PC-3 (cell line): ENCODE measurements at regions of chr5 and their contacts with region 1.

Region 1: GRCh38 chr5:84382363-84383295 is 2.1 kb downstream of the EDIL3 start:
- DNase-seq: no peak
- ATAC-seq: peak; percentile 8
- H3K4me3 ChIP-seq: peak overlapping the region; percentile 77
- H3K27ac ChIP-seq: peak overlapping the region; percentile 46
- H3K4me1 ChIP-seq: peaks cover 15% of the 10 kb centered on the region
- H3K27me3 ChIP-seq: no peaks in the 10 kb centered on the region
- CTCF ChIP-seq: no peak

Region 2: DNA sequence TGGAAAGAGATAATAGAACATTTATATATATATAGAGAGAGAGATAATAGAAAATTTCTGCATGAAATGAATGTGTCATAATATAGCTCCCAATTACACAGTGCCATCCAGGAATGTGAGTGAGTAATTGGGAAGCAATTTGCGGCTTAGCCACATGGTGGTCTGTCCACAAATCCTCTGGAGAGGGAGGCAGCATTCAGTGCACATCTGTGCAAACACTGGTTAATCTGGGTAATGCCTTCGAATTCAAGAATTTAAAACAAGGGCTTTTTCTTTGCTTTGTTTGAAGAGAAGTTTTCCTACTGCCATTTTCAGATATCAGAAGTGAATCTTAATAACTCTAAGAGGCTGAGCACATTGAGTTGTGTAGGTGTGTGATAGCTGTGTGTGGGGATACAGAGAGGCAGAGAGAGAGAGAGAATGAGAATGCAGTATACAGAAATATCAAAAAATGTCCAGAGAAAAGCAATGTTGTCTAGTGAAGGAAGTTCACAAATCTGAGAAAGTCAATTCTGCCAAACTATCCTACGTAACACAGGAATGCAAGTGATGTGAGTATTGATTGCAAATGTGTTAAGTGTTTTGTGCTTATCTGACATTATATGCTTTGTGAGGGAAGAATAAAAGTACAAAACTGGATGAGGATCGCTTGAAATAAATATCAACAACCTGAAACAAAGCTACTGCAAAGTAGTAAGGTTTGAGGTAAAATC is 132.6 kb before region 1 on chr5:
- CTCF ChIA-PET with region 1: no interaction called
- POLR2A ChIA-PET with region 1: no interaction called
- intact Hi-C with region 1: loop called (anchors 5 kb)
- DNase-seq: peak; percentile 84
- ATAC-seq: peak; percentile 76
- H3K4me3 ChIP-seq: peak overlapping the region; percentile 47; the same call in 1 of the 2 replicates
- H3K27ac ChIP-seq: peak overlapping the region; percentile 58
- H3K4me1 ChIP-seq: peaks cover 54% of the 10 kb centered on the region
- H3K27me3 ChIP-seq: no peaks in the 10 kb centered on the region
- CTCF ChIP-seq: no peak

Region 3: DNA sequence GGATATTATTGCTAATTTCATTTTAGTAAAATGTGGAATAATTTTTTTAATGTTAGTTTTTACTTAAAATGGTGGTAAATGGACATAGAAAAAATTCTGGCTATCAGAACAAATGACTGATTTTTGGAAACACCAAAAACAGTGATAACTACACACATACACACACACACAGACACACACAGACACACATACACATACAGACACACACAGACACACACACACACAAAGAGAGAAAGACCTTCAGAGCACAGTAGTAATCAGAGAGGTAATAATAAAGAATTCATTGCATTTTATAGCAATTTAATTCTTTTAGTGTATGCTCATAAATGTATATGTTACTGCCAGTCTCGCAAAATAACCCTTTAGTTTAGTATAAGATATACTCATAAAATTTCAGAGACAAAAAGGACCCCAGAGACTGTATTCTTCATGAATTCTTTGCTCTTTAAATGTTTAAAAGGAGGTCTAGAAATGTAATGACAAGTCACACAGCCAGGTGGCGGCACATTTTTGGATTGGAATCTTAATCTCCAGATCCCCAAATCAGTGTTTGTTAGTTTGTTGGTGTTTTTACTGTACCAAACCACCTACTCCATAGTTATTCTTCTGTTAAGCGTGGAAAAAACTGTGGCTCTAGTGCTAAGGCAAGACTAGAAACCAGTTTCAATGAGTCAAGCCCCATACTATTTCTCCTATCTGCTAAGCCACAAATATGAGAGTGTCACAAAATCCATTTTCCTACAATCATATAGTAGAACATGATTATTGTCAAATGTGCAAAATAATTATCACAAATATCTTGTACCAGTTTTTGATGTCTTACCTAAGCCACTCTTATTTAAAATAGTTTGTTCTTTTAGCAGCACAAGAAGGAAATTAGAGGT is 107.8 kb before region 1 on chr5:
- CTCF ChIA-PET with region 1: no interaction called
- POLR2A ChIA-PET with region 1: interaction called, 3 read pairs
- intact Hi-C with region 1: loop called (anchors 5 kb)
- DNase-seq: peak; percentile 60
- ATAC-seq: no peak
- H3K4me3 ChIP-seq: no peak overlapping the region
- H3K27ac ChIP-seq: no peak overlapping the region
- H3K4me1 ChIP-seq: no peaks in the 10 kb centered on the region
- H3K27me3 ChIP-seq: no peaks in the 10 kb centered on the region
- CTCF ChIP-seq: peak; percentile 72

Region 4: GRCh38 chr5:84445049-84445685 is 62.5 kb after region 1 on chr5:
- CTCF ChIA-PET with region 1: no interaction called
- POLR2A ChIA-PET with region 1: no interaction called
- intact Hi-C with region 1: loop called (anchors 5 kb)
- DNase-seq: peak; percentile 3
- ATAC-seq: peak; percentile 43
- H3K4me3 ChIP-seq: no peak overlapping the region
- H3K27ac ChIP-seq: no peak overlapping the region
- H3K4me1 ChIP-seq: no peaks in the 10 kb centered on the region
- H3K27me3 ChIP-seq: no peaks in the 10 kb centered on the region
- CTCF ChIP-seq: no peak

Region 5: DNA sequence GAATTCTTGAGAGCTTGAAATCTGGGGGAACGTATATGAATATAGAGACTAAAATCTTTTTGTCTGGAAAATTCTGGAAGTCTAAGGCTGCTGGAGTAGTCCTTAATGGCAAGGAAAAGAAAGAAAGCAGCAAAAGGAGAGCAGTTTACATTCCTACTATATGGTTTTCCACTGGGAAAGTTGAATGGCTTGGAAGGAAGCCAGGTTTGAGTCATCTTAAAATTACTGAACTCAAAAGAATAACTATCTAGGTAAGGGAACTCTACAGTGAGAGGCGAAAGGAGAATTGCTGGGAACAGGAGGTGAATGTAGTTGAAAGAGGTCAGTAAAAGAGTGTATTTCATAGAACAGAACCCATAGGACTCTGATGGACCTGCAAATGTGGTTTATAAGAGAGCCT is 260.2 kb after region 1 on chr5:
- CTCF ChIA-PET with region 1: no interaction called
- POLR2A ChIA-PET with region 1: no interaction called
- intact Hi-C with region 1: no loop called
- DNase-seq: peak; percentile 67
- ATAC-seq: peak; percentile 56
- H3K4me3 ChIP-seq: peak overlapping the region; percentile 43; the same call in 1 of the 2 replicates
- H3K27ac ChIP-seq: no peak overlapping the region
- H3K4me1 ChIP-seq: peaks cover 4% of the 10 kb centered on the region; the same call in 1 of the 2 replicates
- H3K27me3 ChIP-seq: no peaks in the 10 kb centered on the region
- CTCF ChIP-seq: no peak